Activated CD8-positive, alpha-beta memory T cell treated with anti-CD3 and anti-CD28 coated beads, Interleukin-2, amount 10 ng/mL, durations not matched to agents 7 days and 5 days (primary cell): ENCODE measurements at regions of chr6 and their contacts with region 1.

Region 1: DNA sequence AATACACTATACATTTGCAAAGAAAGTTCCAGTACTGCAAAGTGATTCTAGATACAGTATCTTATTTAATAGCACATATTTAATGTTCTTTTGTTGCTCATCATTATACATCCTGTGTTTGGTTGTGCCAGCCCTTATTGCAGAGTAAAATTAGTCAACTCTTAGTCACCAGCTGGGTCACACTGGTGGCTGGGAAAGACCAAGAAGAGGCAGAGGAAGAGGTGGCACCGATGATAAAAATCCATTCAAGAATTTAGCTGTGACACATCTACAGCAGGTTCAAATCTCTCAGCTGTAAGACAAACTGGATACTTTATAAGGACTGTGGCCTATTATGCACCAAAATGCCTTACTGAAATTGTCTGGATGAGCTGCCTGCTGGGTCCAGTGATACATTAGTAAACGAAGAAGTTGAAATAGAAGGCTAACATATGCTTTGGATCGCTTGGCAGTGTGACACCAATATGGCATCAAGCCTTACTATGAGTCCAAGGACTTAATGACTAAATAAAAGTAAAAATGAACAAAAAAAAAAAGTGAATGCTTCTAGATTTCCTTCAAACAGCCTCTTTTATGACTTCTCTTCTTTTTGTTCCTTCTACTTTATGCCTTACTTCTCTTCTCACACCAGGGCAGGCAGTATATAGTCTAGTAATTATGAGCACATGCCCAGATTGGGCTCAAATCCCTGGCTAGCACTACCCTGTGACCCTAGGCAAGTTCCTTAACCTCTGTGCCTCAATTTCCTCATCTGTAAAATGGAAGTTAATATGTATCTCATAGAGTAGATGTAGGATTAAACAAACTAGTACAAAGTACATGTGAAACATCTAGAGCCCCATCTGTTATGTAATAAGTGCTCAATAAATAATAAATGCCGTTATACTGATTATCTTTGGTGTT is 29.4 kb upstream of the RNF8 start:
- DNase-seq: peak; percentile 53
- ATAC-seq: no peak
- H3K4me3 Mint-ChIP-seq: no peak overlapping the region
- H3K27ac Mint-ChIP-seq: no peak overlapping the region
- H3K4me1 Mint-ChIP-seq: peaks cover 18% of the 10 kb centered on the region
- H3K27me3 Mint-ChIP-seq: no peaks in the 10 kb centered on the region

Region 2: DNA sequence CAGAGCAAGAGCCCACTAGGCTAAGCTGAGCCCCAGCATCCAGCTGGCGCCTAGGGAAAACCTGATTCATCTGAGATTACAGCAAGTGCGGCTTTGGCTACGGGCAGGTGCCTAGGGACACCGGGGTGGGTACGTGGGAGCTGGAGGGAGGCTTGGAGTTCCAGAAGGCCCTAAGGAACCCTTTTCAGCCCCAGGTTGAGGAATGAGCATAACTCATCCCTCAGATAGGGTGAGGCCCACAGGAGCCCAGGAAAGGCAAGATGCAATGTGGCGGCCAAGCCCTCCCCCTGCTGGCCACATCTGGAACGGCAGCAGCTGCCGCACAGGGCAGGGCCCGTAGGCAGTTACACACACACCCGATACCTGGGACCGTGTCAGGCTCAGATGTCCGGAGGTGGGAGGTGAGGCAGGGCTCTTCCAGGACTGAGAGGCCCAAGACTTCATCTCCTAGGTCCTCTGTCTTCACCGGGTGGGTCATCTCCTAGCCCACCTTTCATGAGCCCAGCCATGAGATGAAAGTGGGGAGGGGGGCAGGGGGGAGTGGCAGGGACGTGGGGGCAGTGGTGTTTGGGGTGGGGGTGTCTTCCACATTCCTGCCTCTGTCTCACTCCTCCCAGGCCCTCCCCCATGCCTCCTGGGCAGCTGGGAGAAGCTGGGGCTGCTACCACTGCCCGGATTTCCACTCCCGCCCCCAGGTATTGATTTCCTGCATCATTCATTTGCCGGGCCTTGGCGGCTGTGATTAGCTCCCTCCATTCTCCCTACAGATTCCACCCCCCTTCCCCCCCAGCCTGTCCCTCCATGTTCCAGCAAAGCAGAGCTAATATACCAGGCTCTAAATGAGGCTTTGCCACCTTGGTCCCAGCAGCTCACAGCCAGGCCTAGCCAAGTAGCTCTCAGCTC is 367.8 kb after region 1 on chr6:
- CTCF ChIA-PET with region 1: interaction called, 18 read pairs
- DNase-seq: peak; percentile 83
- ATAC-seq: peak; percentile 66
- H3K4me3 Mint-ChIP-seq: no peak overlapping the region
- H3K27ac Mint-ChIP-seq: no peak overlapping the region
- H3K4me1 Mint-ChIP-seq: peaks cover 17% of the 10 kb centered on the region
- H3K27me3 Mint-ChIP-seq: peaks cover 31% of the 10 kb centered on the region